ENCODE measurements at regions of chr2 and their contacts with region 1.

Region 1: GRCh38 chr2:70124983-70125480 is 37.8 kb downstream of the PCBP1 start:
- DNase-seq: peak; percentile 71 to 85
- ATAC-seq: peak; percentile 46 to 66 (median 51)
- H3K4me3 ChIP-seq: peak overlapping the region; percentile 83
- H3K27ac ChIP-seq: peak overlapping the region; percentile 99
- H3K4me1 ChIP-seq: peaks cover 51% of the 10 kb centered on the region
- H3K27me3 ChIP-seq: no peaks in the 10 kb centered on the region
- CTCF ChIP-seq: no peak

Region 2: GRCh38 chr2:69386789-69387734 is 738.0 kb before region 1 on chr2 and contains the start of gene GFPT1:
- intact Hi-C with region 1: no loop called
- DNase-seq: peak; percentile 95 to 97
- ATAC-seq: peak; percentile 98 to 99 (median 99)
- H3K4me3 ChIP-seq: peak within 1 kb of the TSS; percentile 91
- H3K27ac ChIP-seq: peak within 1 kb of the TSS; percentile 66
- H3K4me1 ChIP-seq: peaks cover 9% of the 10 kb centered on the region
- H3K27me3 ChIP-seq: no peaks in the 10 kb centered on the region
- CTCF ChIP-seq: no peak
- total RNA-seq, gene GFPT1: 19.8 to 34.5 (median 33.5) TPM

Region 3: GRCh38 chr2:70086838-70087701 is 38.0 kb before region 1 on chr2 and contains the start of gene PCBP1:
- intact Hi-C with region 1: loop called (anchors 1 to 2 kb)
- DNase-seq: peak; percentile 98 to 99
- ATAC-seq: peak; percentile 79 to 85 (median 83)
- H3K4me3 ChIP-seq: peak within 1 kb of the TSS; percentile 96
- H3K27ac ChIP-seq: peak within 1 kb of the TSS; percentile 100
- H3K4me1 ChIP-seq: peaks cover 29% of the 10 kb centered on the region
- H3K27me3 ChIP-seq: no peaks in the 10 kb centered on the region
- CTCF ChIP-seq: no peak
- total RNA-seq, gene PCBP1: 423 to 683 (median 522) TPM

Region 4: DNA sequence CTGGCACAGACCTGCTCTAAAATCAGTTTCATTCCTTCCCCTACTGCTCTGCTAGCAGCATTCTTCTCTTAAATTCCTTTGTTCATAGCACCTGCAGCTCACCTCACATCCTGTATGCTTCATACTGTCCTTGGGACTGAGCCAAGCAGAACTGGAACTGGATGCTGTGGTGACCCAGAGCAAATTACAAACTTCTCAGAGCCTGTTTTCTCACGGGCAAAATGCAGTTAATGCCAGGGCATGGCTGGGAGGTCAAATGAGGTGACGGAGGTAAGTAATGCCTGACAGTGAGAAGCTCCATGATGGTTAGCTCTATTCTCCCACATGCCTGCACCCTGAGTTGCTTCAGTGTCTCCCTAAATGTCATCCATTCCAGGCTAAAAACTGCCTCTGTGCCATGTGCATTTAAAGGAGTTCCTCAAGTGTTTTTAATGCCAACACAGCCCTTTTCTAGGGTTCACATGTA is 36.1 kb after region 1 on chr2:
- intact Hi-C with region 1: no loop called
- DNase-seq: no peak
- ATAC-seq: no peak
- H3K4me3 ChIP-seq: no peak overlapping the region
- H3K27ac ChIP-seq: no peak overlapping the region
- H3K4me1 ChIP-seq: no peaks in the 10 kb centered on the region
- H3K27me3 ChIP-seq: no peaks in the 10 kb centered on the region
- CTCF ChIP-seq: no peak